ENCODE measurements at regions of chr18 and their contacts with region 1.

Region 1: DNA sequence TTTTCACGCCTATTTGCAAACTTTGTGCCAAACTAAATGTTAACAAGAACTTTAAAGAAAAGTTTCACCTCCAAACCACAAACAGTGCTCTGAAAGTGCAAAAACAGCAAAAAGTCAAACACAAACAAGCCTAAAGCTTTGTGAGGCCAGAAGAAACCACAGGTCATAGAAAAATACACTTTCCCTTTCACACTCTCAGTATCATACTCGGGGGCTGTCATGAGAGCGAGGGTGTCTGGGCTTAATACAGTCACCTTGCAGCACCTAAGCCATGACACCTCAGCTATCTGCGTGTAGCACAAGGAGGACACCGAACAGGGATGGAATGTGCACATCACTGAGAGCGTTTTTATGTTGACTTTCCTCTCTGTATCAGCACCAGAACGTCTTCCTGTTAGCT is 26.6 kb upstream of the SEH1L start:
- DNase-seq: peak in 4 of 5 donors; percentile 29 to 79 (median 53)
- H3K4me3 ChIP-seq: peak overlapping the region; percentile 14
- H3K4me3 Mint-ChIP-seq: peak overlapping the region; percentile 42 to 80 (median 72)
- H3K27ac ChIP-seq: peak overlapping the region; percentile 48
- H3K27ac Mint-ChIP-seq: peak overlapping the region; percentile 70 to 91 (median 81)
- H3K4me1 ChIP-seq: peaks cover 6% of the 10 kb centered on the region
- H3K4me1 Mint-ChIP-seq: peaks cover 21 to 36% (median 29%) of the 10 kb centered on the region in 3 donors
- H3K27me3 ChIP-seq: no peaks in the 10 kb centered on the region
- H3K27me3 Mint-ChIP-seq: no peaks in the 10 kb centered on the region

Region 2: GRCh38 chr18:12726774-12727550 is 194.2 kb before region 1 on chr18:
- CTCF ChIA-PET with region 1: interaction called, 10 read pairs
- POLR2A ChIA-PET with region 1: no interaction called
- DNase-seq: peak; percentile 45 to 62 (median 55)
- H3K4me3 ChIP-seq: no peak overlapping the region
- H3K4me3 Mint-ChIP-seq: no peak overlapping the region
- H3K27ac ChIP-seq: no peak overlapping the region
- H3K27ac Mint-ChIP-seq: peak overlapping the region in 5 of 8 donors; percentile 10 to 72 (median 23)
- H3K4me1 ChIP-seq: no peaks in the 10 kb centered on the region
- H3K4me1 Mint-ChIP-seq: peaks cover 0 to 2% (median under 1%) of the 10 kb centered on the region in 3 donors
- H3K27me3 ChIP-seq: no peaks in the 10 kb centered on the region
- H3K27me3 Mint-ChIP-seq: no peaks in the 10 kb centered on the region

Region 3: GRCh38 chr18:12791610-12792009 is 129.6 kb before region 1 on chr18:
- CTCF ChIA-PET with region 1: no interaction called
- POLR2A ChIA-PET with region 1: no interaction called
- DNase-seq: no peak
- H3K4me3 ChIP-seq: no peak overlapping the region
- H3K4me3 Mint-ChIP-seq: no peak overlapping the region
- H3K27ac ChIP-seq: no peak overlapping the region
- H3K27ac Mint-ChIP-seq: peak overlapping the region in 1 of 8 donors; percentile 16
- H3K4me1 ChIP-seq: no peaks in the 10 kb centered on the region
- H3K4me1 Mint-ChIP-seq: peaks cover 0 to 1% (median 0%) of the 10 kb centered on the region in 3 donors
- H3K27me3 ChIP-seq: no peaks in the 10 kb centered on the region
- H3K27me3 Mint-ChIP-seq: peaks cover 0 to 2% of the 10 kb centered on the region in 2 donors

Region 4: GRCh38 chr18:12862467-12862866 is 58.7 kb before region 1 on chr18:
- CTCF ChIA-PET with region 1: no interaction called
- POLR2A ChIA-PET with region 1: no interaction called
- DNase-seq: no peak
- H3K4me3 ChIP-seq: no peak overlapping the region
- H3K4me3 Mint-ChIP-seq: no peak overlapping the region
- H3K27ac ChIP-seq: no peak overlapping the region
- H3K27ac Mint-ChIP-seq: peak overlapping the region in 4 of 8 donors; percentile 12 to 60 (median 34)
- H3K4me1 ChIP-seq: peaks cover 16% of the 10 kb centered on the region
- H3K4me1 Mint-ChIP-seq: peaks cover 51 to 77% (median 70%) of the 10 kb centered on the region in 3 donors
- H3K27me3 ChIP-seq: no peaks in the 10 kb centered on the region
- H3K27me3 Mint-ChIP-seq: no peaks in the 10 kb centered on the region

Measured in CD8-positive, alpha-beta memory T cell (primary cell).